Endothelial cell of umbilical vein (primary cell): ENCODE measurements at regions of chr7 and their contacts with region 1.

Region 1: GRCh38 chr7:5363729-5364128 is 59.9 kb downstream of the TNRC18 start:
- DNase-seq: no peak
- H3K4me3 ChIP-seq: no peak overlapping the region
- H3K27ac ChIP-seq: no peak overlapping the region
- H3K4me1 ChIP-seq: no peaks in the 10 kb centered on the region
- H3K27me3 ChIP-seq: no peaks in the 10 kb centered on the region
- CTCF ChIP-seq: no peak
- POLR2A ChIP-seq: no peak

Region 2: GRCh38 chr7:5139998-5140397 is 223.7 kb before region 1 on chr7:
- CTCF ChIA-PET with region 1: no interaction called
- POLR2A ChIA-PET with region 1: no interaction called
- dilution Hi-C with region 1: no loop called
- intact Hi-C with region 1: no loop called
- DNase-seq: peak; percentile 31
- H3K4me3 ChIP-seq: no peak overlapping the region
- H3K27ac ChIP-seq: no peak overlapping the region
- H3K4me1 ChIP-seq: no peaks in the 10 kb centered on the region
- H3K27me3 ChIP-seq: no peaks in the 10 kb centered on the region
- CTCF ChIP-seq: peak; percentile 31 to 47
- POLR2A ChIP-seq: no peak

Region 3: DNA sequence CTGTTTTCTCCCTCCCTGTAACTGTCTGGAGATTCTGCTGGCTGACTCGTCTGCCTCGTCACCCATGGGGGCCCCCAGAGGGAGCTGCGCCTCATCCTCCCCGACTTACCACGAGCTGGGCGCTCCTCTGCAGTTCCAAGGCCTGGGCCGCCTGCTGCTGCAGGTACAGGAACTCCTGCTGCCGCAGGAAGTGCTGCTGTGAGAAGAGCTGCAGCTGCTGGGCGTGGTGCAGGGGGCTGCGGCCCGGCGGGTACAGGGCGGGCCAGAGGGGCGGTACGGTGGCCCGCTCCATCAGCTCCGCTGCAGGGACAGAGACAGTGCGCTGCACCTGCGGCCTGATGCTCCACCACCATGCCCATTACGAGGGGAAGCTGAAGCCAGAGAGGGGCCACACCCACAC is 12.2 kb after region 1 on chr7:
- CTCF ChIA-PET with region 1: interaction called, 10 read pairs
- POLR2A ChIA-PET with region 1: no interaction called
- dilution Hi-C with region 1: no loop called
- intact Hi-C with region 1: no loop called
- DNase-seq: no peak
- H3K4me3 ChIP-seq: no peak overlapping the region
- H3K27ac ChIP-seq: no peak overlapping the region
- H3K4me1 ChIP-seq: no peaks in the 10 kb centered on the region
- H3K27me3 ChIP-seq: no peaks in the 10 kb centered on the region
- CTCF ChIP-seq: no peak
- POLR2A ChIP-seq: no peak

Region 4: GRCh38 chr7:5423844-5424688 is 60.3 kb after region 1 on chr7:
- CTCF ChIA-PET with region 1: interaction called, 13 read pairs
- POLR2A ChIA-PET with region 1: interaction called, 5 read pairs
- dilution Hi-C with region 1: no loop called
- intact Hi-C with region 1: loop called (anchors 2 kb)
- DNase-seq: peak; percentile 98
- H3K4me3 ChIP-seq: peak overlapping the region; percentile 87 to 94 (median 90)
- H3K27ac ChIP-seq: peak overlapping the region; percentile 72
- H3K4me1 ChIP-seq: peaks cover 6% of the 10 kb centered on the region
- H3K27me3 ChIP-seq: no peaks in the 10 kb centered on the region
- CTCF ChIP-seq: no peak
- POLR2A ChIP-seq: peak; percentile 57

Region 5: DNA sequence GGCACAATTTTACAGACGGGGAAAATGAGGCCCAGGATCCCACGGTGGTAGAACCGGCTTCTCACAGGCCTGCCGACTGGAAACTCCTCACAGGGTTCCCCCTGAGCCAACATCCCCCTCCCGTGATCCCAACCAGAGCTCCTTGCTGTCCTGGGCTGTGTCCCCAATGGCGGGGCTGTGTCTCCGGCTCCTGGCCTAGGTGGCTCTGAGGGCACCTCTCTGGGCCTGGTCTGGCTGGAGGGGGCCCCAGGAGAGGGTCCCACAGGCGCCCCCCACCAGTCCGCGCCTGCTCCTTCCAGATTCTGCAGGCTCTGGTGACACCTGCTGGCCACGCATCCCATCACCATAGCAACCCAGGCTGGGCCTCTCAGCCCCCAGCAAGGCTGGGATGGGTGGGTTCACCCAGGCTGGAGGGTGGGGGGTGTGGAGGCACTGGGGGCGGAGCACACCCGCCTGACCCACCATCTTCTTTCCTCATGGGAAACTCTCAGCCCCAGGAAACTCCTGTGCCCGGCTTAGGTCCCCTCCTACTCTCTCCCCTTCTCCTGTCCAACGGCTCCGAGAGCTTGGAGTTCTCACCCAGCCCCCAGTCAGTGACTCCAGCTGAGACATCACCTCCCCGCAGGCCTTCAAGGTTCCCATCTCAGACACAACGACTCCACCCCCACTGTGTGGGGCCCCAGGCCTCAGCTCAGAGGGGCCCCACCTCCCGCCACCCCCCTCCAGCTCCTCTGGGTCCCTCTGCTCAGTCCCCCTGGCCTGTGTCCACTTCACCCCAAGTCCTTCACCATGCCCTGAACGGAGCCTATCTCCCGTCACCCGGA is 87.0 kb after region 1 on chr7:
- CTCF ChIA-PET with region 1: interaction called, 46 read pairs
- POLR2A ChIA-PET with region 1: no interaction called
- dilution Hi-C with region 1: no loop called
- intact Hi-C with region 1: loop called (anchors 1 kb)
- DNase-seq: peak; percentile 54
- H3K4me3 ChIP-seq: no peak overlapping the region
- H3K27ac ChIP-seq: no peak overlapping the region
- H3K4me1 ChIP-seq: no peaks in the 10 kb centered on the region
- H3K27me3 ChIP-seq: no peaks in the 10 kb centered on the region
- CTCF ChIP-seq: peak; percentile 50 to 70
- POLR2A ChIP-seq: no peak

Region 6: DNA sequence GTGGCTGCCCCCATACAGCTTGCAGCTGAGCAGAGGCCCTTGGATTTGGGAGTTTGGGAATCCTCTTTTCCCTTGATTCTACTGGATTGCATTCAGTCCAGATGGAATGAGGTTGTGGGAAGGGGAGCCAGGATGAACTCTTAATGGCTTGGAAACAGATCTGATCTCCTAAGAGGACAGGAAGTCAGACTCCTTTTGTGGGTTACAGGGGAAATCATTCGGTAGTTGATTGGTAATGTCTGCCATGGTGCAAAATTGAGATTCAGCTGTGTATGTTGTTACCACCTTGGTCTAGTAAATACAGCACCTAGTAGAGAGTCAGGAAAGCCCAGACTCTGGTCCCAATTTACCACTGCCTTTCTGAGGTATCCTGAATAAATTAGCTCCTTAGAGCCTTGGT is 204.1 kb after region 1 on chr7:
- CTCF ChIA-PET with region 1: no interaction called
- POLR2A ChIA-PET with region 1: no interaction called
- dilution Hi-C with region 1: no loop called
- intact Hi-C with region 1: no loop called
- DNase-seq: no peak
- H3K4me3 ChIP-seq: no peak overlapping the region
- H3K27ac ChIP-seq: no peak overlapping the region
- H3K4me1 ChIP-seq: peaks cover 20% of the 10 kb centered on the region
- H3K27me3 ChIP-seq: no peaks in the 10 kb centered on the region
- CTCF ChIP-seq: no peak
- POLR2A ChIP-seq: no peak

Region 7: DNA sequence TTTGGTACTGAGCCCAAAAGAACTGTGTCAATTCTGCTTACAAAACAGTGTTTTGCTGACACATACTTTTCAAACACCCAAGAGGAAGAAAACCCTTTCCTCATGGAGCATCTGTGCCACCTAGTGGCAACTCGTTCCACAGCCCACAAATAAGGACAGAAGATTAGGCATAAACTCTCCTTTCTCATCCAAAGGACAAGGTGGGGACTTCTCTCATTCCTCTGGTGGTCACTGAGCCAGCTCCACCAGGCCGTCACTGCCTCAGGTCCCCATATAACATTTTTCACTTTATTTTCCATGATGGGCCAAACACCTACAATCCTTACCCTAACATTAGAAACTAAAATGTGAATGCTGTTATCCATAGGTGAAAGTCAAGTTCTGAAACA is 340.8 kb after region 1 on chr7:
- CTCF ChIA-PET with region 1: no interaction called
- POLR2A ChIA-PET with region 1: no interaction called
- dilution Hi-C with region 1: no loop called
- intact Hi-C with region 1: no loop called
- DNase-seq: peak; percentile 87
- H3K4me3 ChIP-seq: no peak overlapping the region
- H3K27ac ChIP-seq: no peak overlapping the region
- H3K4me1 ChIP-seq: no peaks in the 10 kb centered on the region
- H3K27me3 ChIP-seq: no peaks in the 10 kb centered on the region
- CTCF ChIP-seq: peak; percentile 80 to 81
- POLR2A ChIP-seq: no peak

Region 8: DNA sequence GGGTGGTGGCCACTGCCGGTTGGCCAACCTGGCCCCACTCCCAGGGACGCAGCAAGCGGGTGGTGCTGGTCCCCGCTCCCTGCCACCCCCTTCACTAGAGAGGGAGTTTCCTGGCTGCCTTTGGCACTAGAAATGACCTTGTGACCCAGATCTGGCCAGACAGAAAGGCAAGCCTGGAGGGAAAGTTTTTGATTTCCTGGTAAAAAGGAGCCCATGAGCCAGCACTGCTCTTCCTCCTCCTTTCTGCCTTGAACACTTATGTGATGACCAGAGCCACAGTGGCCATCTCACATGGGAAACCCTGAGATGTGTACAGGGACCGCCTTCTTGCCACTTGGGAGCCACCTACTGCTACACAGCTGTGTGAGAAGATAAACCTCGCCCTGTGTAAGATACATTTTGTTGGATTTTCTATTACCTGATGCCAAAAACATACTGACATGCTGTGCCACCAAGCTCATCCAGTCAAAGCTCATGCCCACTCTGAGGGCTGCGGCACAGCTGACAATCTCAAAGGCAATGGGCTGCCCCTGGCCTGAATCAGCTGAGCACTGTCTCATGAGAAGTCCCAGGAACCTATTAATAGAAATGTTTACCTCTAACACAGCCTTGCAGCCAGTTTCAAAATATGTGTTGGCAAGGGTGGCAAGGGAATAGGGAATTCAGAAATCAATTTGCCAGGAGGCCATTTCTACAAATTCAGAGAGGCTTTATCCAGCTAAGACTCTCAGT is 814.7 kb after region 1 on chr7:
- CTCF ChIA-PET with region 1: no interaction called
- POLR2A ChIA-PET with region 1: no interaction called
- dilution Hi-C with region 1: no loop called
- intact Hi-C with region 1: no loop called
- DNase-seq: no peak
- H3K4me3 ChIP-seq: no peak overlapping the region
- H3K27ac ChIP-seq: no peak overlapping the region
- H3K4me1 ChIP-seq: peaks cover 9% of the 10 kb centered on the region
- H3K27me3 ChIP-seq: no peaks in the 10 kb centered on the region
- CTCF ChIP-seq: no peak
- POLR2A ChIP-seq: no peak